ENCODE measurements at regions of chr5 and their contacts with region 1.

Region 1: DNA sequence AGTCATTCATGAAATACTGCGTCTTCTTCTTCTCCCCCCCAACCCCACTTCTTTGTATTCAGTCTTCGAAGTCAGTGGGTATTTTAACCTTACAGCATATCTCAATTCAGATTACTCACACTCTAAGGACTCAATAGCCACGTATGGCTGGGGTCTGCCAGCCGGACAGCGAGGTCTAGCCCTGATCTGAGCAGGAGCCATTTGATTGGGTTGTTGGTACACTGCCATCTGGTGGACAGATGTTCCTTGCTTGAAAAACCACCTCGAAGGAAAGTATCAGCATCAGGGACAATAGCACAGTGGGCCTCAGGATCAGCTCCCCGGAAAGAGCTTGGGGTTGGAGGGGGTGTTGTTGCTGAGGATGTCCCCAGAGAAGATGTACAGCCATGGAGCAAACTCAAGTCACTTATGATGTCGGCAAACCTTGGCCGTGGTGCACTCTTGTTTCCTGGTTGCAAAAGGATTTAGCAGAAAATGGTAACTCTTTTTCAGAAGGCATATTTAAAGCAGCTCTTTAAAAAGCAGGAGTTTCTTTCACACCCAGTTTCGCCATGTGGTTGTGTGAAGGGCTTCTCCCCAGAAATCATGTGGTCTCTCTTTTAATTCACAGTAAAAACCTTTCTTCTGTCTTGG is 31.7 kb upstream of the KCNMB1 start:
- DNase-seq: peak; percentile 65
- H3K4me3 Mint-ChIP-seq: no peak overlapping the region
- H3K27ac Mint-ChIP-seq: no peak overlapping the region
- H3K4me1 Mint-ChIP-seq: peaks cover 15% of the 10 kb centered on the region
- H3K27me3 Mint-ChIP-seq: peaks cover 35% of the 10 kb centered on the region

Region 2: DNA sequence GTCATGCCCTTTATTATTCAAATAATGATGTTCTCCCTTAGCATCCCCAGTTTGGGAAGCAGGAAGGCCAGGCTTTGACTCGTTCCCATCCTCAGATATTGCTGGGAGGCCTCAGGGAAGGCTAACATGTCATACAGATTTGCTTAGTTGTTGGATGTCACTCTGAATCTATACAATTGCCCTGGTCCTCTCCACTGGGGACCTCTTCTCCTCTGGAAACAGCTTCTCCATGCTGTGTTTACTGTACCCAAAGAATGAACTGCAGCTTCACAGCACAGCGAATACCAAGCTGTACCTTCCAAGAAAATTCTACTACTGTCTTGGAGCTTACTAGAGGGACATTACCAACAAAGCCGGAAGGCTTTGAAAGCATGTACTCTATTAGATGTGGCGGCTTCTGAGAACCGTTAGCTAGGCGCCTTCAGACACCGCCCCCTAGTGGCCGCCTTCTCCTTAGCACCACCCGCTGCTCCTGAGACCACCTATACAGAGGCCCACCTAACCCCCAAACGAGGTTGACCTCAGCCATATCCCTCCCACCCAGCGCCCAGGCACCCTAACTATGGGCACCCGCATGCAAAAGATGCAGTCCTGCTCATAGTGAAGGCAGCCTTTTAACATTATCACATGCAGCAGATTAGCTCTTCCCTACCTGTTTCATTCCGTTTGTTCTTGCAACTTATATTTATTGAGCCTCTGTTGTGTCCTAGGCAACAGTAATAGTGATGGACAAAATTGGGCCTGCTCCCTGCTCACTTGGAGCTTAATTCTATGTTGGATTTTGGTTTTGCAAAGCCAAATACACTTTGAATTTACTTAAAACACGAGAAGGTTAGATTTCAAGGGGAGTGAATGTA is 350.1 kb before region 1 on chr5:
- CTCF ChIA-PET with region 1: no interaction called
- DNase-seq: peak; percentile 32
- H3K4me3 Mint-ChIP-seq: no peak overlapping the region
- H3K27ac Mint-ChIP-seq: no peak overlapping the region
- H3K4me1 Mint-ChIP-seq: no peaks in the 10 kb centered on the region
- H3K27me3 Mint-ChIP-seq: no peaks in the 10 kb centered on the region

Region 3: DNA sequence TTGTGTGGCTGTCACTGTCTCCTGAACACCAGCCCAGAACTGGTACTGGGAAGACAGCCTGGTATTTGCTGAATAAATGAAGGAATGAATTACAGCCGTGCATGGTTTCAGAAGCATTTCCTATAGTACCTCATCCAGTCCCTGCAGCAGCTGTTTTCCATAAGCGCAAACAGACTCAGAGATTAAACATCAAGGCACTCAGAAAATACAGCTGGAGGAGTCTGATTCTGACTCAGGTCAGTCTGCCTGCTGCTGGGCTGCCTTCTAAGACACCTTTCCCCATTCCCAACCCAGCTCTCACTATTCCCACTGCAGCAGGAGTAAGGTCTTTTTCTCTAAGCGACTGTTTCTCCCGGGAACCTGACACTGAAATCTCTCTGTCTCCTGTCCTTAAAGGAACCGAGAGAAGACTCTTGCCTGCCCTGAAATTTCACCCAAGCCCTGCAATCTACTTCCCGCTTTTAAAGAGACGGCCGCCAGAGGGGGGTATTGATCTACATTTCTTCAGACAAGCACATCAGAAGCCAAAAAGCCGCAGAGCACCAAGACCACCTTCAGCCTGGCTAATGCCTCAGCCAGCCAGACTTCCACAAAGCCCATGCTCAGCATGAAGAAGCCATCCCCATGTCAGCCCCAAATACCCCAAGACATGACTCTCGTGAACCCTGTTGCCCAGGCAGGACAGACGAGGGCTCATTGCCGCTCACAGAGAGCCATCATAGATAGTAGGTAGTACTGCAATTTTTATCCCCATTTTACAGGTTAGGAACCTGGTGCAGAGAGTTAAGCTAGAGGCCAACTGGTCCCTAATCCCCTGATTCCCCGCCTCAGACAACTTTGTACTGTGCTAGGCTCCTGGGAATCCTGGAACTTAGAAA is 320.6 kb before region 1 on chr5:
- CTCF ChIA-PET with region 1: interaction called, 16 read pairs
- DNase-seq: peak; percentile 81
- H3K4me3 Mint-ChIP-seq: no peak overlapping the region
- H3K27ac Mint-ChIP-seq: no peak overlapping the region
- H3K4me1 Mint-ChIP-seq: no peaks in the 10 kb centered on the region
- H3K27me3 Mint-ChIP-seq: peaks cover 38% of the 10 kb centered on the region

Region 4: DNA sequence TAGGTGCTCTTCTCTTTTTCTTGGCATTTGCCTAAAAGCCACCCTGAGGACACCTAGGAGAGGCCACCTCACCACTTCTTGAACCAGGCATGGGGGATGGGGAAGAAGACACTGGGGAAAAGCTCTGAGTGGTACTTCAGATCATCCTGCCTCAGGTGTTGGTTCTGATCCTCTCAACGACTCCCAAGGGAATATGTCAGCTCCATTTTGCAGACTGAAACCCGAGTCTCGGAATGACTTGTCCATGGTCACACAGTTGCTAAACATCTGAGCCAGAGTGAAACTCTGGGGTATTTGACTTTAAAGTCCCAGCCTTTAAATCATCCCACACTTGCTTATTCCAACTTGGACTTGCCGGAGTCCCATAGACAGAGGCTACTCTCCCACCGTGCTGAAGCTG is 242.1 kb after region 1 on chr5:
- CTCF ChIA-PET with region 1: no interaction called
- DNase-seq: no peak
- H3K4me3 Mint-ChIP-seq: no peak overlapping the region
- H3K27ac Mint-ChIP-seq: no peak overlapping the region
- H3K4me1 Mint-ChIP-seq: no peaks in the 10 kb centered on the region
- H3K27me3 Mint-ChIP-seq: peaks cover 30% of the 10 kb centered on the region

Measured in activated naive CD4-positive, alpha-beta T cell treated with anti-CD3 and anti-CD28 coated beads, Interleukin-2, amount 10 ng/mL, durations not matched to agents 7 days and 5 days (primary cell).